ENCODE measurements at regions of chr2 and their contacts with region 1.

Region 1: DNA sequence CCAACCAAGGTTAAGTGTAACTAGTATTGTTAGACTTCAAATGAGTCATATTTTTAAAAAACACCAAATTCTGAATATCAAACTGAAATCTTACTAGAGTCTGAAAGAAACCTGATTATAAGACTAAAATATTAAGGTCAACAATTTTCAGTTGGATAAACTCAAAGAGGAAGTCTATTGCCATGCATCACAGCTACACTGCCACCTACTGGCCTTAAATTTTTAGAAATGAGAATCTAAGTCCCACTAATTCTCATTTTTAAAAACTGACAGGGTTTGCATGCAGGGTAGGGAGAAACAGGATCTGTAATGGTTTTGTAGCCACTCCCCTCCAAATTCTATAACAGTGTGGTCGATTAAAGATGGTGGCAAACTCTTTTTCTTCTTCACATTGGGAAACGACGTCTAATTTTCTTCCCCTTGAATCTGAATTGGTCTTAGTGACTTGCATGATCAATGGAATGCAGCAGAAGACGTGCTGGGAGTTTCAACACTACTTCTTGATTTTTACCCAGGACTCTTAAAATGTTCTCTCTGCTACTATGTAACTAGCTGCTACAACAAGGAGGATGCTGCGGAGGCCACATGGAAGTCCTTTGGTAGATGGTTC is 176.1 kb upstream of the SESTD1 start:
- DNase-seq: peak; percentile 43
- H3K4me3 Mint-ChIP-seq: no peak overlapping the region
- H3K27ac Mint-ChIP-seq: no peak overlapping the region
- H3K4me1 Mint-ChIP-seq: peaks cover 11% of the 10 kb centered on the region
- H3K27me3 Mint-ChIP-seq: no peaks in the 10 kb centered on the region
- CTCF ChIP-seq: peak; percentile 53

Region 2: GRCh38 chr2:179454443-179455171 is 13.9 kb after region 1 on chr2:
- CTCF ChIA-PET with region 1: interaction called, 10 read pairs
- POLR2A ChIA-PET with region 1: interaction called, 9 read pairs
- intact Hi-C with region 1: no loop called
- DNase-seq: peak; percentile 71
- H3K4me3 Mint-ChIP-seq: no peak overlapping the region
- H3K27ac Mint-ChIP-seq: peak overlapping the region; percentile 82
- H3K4me1 Mint-ChIP-seq: peaks cover 13% of the 10 kb centered on the region
- H3K27me3 Mint-ChIP-seq: no peaks in the 10 kb centered on the region
- CTCF ChIP-seq: no peak

Region 3: DNA sequence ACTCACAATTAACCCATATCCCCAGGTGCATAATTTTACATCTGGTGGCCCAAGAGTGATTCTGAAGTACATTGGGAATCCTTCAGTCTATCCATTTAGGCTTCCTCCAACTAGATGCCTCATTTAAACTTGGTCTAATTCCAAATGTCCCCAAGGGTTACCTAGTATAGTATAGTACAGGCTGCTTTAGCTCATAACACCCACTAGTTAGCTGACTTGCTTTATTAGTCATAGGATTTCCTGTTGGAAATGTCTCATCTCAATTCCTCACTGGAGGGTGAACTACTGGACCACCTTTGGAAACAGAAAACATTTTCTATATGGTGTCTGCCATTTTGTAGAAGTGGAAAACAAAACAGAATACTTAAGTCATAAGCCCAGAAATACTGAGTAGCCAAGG is 26.4 kb after region 1 on chr2:
- CTCF ChIA-PET with region 1: no interaction called
- POLR2A ChIA-PET with region 1: no interaction called
- intact Hi-C with region 1: no loop called
- DNase-seq: peak; percentile 65
- H3K4me3 Mint-ChIP-seq: no peak overlapping the region
- H3K27ac Mint-ChIP-seq: no peak overlapping the region
- H3K4me1 Mint-ChIP-seq: no peaks in the 10 kb centered on the region
- H3K27me3 Mint-ChIP-seq: no peaks in the 10 kb centered on the region
- CTCF ChIP-seq: no peak

Region 4: GRCh38 chr2:179550214-179550613 is 109.5 kb after region 1 on chr2:
- CTCF ChIA-PET with region 1: no interaction called
- POLR2A ChIA-PET with region 1: no interaction called
- intact Hi-C with region 1: no loop called
- DNase-seq: no peak
- H3K4me3 Mint-ChIP-seq: no peak overlapping the region
- H3K27ac Mint-ChIP-seq: no peak overlapping the region
- H3K4me1 Mint-ChIP-seq: no peaks in the 10 kb centered on the region
- H3K27me3 Mint-ChIP-seq: no peaks in the 10 kb centered on the region
- CTCF ChIP-seq: no peak

Region 5: DNA sequence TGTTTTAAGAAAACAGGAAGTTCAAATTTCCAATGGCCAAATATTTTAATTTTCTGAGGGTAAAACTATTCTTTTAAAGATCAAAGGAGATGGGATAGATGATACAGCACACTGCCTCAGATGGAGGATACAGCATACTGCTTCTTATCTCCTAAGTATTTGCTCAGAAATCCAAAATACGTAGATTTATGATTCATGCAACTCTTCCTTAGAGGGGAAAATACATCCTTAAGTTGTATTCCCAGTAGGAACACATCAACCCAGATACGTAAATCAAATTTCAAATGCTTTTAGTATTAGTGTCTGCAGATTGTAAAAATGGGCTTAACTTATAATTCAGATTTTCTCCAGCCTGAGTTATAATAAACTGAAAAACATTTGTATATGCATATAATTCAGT is 185.5 kb after region 1 on chr2:
- CTCF ChIA-PET with region 1: no interaction called
- POLR2A ChIA-PET with region 1: no interaction called
- intact Hi-C with region 1: no loop called
- DNase-seq: no peak
- H3K4me3 Mint-ChIP-seq: no peak overlapping the region
- H3K27ac Mint-ChIP-seq: no peak overlapping the region
- H3K4me1 Mint-ChIP-seq: no peaks in the 10 kb centered on the region
- H3K27me3 Mint-ChIP-seq: no peaks in the 10 kb centered on the region
- CTCF ChIP-seq: no peak

Measured in MCF 10A (cell line).